ENCODE measurements at regions of chr6 and their contacts with region 1.

Region 1: GRCh38 chr6:112087136-112087911 is at the starts of genes FAM229B and TUBE1:
- DNase-seq: peak; percentile 92 to 95 (median 95)
- ATAC-seq: peak; percentile 96 to 99 (median 98)
- H3K4me3 ChIP-seq: peak within 1 kb of the TSS; percentile 69 to 93 (median 82)
- H3K27ac ChIP-seq: peak within 1 kb of the TSS; percentile 61 to 87 (median 71)
- H3K4me1 ChIP-seq: peaks cover 0 to 18% (median 9%) of the 10 kb centered on the region in 4 donors
- H3K27me3 ChIP-seq: no peaks in the 10 kb centered on the region
- CTCF ChIP-seq: no peak
- POLR2A ChIP-seq: peak; percentile 80
- total RNA-seq, gene FAM229B: 6.3 to 13.9 (median 9.1) TPM
- total RNA-seq, gene TUBE1: 16.2 to 38.0 (median 27.7) TPM

Region 2: DNA sequence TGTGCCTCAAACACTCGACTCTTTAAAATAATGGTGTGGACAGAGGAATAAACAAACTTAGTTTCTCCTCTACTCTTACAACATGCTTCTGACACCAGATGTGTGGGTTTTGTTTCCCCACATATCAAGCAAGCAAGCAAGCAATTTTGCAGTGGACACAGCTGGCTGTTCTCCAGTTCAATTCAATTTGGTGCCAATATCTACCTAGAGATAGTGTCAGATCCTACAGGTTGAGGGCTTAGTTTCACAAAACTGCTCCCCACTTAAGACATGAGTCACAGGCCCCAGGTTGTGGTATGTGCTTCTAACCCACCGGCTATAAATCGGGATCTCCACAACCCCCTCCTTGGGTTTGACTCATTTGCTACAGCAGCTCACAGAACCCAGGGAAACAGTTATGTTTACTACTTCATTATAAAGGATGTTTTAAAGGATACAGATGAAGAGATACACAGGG is 350.2 kb before region 1 on chr6:
- intact Hi-C with region 1: no loop called
- DNase-seq: no peak
- ATAC-seq: peak in 1 of 4 donors; percentile 13
- H3K4me3 ChIP-seq: no peak overlapping the region
- H3K27ac ChIP-seq: no peak overlapping the region
- H3K4me1 ChIP-seq: peaks cover 0 to 7% (median 0%) of the 10 kb centered on the region in 4 donors
- H3K27me3 ChIP-seq: no peaks in the 10 kb centered on the region
- CTCF ChIP-seq: no peak
- POLR2A ChIP-seq: no peak

Region 3: DNA sequence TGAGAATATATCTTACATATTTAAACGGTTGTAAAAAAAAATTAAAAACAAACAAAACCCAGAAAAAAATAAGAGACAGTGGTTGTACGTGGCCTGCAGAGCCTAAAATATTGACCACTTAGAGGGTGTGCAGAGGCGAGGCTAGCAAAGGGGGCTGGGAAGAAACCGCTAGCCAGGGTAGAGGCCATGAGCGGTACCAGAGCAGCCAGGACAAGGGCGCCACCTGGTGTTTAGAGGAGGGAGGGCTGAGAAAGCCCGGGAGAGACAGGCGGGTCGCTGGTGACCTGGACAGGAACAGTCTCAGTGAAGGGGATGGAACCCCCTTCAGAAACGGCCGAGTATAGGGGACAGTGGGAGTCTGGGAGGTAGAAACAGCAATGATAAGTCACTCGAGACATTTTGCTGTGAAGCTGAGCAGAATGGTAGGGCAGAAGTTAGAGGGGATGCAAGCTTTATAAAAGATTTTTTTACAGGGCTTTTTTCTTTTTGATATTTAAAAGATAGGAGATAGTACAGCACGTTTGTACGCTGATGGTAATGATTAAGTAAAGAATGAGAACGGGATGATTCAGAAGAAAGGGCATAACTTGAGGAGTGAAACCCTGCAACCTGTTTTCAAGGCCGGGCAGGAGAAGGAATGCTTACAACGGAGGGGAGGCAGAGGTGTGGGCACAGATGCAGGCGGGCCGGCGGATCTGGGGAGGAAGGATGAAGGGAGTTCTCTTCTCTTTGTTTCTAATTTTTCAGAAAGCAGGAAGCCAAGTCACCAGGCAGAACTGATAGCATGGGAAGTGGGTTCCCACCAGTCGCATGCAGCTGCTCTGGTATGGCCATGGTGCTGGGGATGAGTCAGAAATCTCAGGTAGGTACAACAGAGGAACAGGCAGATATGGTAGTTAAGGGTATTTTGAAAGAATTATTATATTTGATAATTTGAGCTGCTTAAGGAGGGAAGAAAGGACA is 76.3 kb after region 1 on chr6:
- intact Hi-C with region 1: loop called in 1 of 2 experiments (anchors 5 kb)
- DNase-seq: peak; percentile 75 to 82 (median 75)
- ATAC-seq: peak; percentile 100
- H3K4me3 ChIP-seq: no peak overlapping the region
- H3K27ac ChIP-seq: no peak overlapping the region
- H3K4me1 ChIP-seq: no peaks in the 10 kb centered on the region
- H3K27me3 ChIP-seq: no peaks in the 10 kb centered on the region
- CTCF ChIP-seq: peak; percentile 79 to 93 (median 88)
- POLR2A ChIP-seq: no peak

Region 4: DNA sequence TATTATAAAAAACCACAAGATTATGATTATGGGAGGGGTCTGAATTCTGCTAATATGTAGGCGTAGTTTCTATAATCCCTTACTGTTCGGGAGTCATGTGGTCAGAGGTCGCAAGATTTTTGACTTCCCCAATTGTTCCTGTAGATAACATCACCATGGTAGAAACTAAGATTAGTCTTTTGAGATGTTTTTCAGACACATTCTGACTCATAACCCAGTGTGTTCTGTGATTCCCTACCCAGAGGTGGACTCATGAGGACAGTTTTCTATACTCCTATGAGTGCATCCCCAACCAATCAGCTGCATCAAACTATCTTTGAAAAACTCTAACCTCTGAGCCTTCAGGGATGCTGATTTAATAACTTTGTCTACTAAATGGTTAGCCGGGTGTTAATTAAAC is 435.3 kb after region 1 on chr6:
- intact Hi-C with region 1: no loop called
- DNase-seq: no peak
- ATAC-seq: no peak
- H3K4me3 ChIP-seq: no peak overlapping the region
- H3K27ac ChIP-seq: no peak overlapping the region
- H3K4me1 ChIP-seq: no peaks in the 10 kb centered on the region
- H3K27me3 ChIP-seq: no peaks in the 10 kb centered on the region
- CTCF ChIP-seq: no peak
- POLR2A ChIP-seq: no peak